ENCODE measurements at regions of chr14 and their contacts with region 1.

Region 1: DNA sequence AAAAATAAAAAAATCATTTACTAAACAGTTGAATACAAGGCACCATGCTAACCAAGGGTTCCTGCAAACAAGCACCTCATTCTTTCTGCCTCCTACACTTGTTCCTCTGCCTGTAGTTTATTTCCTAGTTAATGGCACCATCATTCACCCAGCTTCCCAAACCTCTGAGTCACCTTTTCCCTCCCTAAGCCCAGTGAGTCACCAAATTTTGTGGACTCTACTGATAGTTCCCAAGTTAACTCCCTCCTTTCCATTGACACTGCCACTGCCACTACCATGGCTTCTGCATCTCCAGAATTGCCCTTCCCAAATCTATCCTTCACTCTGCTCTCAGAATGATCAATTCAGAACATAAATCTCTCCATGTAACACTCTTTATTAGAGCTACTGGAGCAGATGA is 2.0 kb upstream of the GARIN2 start:
- DNase-seq: peak; percentile 67 to 90
- H3K4me3 ChIP-seq: peak overlapping the region; percentile 30; the same call in 1 of the 2 replicates
- H3K27ac ChIP-seq: peak overlapping the region; percentile 73
- H3K4me1 ChIP-seq: peaks cover 44% of the 10 kb centered on the region
- H3K27me3 ChIP-seq: no peaks in the 10 kb centered on the region
- CTCF ChIP-seq: no peak

Region 2: DNA sequence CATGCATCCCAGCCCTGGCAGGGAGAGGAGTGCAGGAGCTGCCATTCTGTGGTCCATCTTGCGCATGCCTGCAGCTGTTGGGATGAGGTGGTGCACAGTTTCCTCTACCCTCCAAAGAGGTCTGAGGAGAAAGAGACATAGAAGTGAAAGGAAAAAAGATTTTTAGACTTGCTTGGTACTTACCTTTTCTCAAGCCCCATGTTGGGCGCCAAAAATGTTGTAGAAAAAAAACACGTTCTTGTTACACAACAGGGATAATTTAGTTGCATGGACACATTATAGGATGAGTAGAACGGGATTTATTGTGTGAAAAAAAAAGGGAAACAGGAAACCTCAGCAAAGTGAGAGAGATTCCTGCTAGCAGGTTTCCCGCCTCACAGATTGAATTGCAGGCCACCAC is 242.3 kb before region 1 on chr14:
- CTCF ChIA-PET with region 1: no interaction called
- POLR2A ChIA-PET with region 1: no interaction called
- intact Hi-C with region 1: no loop called
- DNase-seq: no peak
- H3K4me3 ChIP-seq: no peak overlapping the region
- H3K27ac ChIP-seq: no peak overlapping the region
- H3K4me1 ChIP-seq: no peaks in the 10 kb centered on the region
- H3K27me3 ChIP-seq: no peaks in the 10 kb centered on the region
- CTCF ChIP-seq: no peak

Region 3: GRCh38 chr14:67221248-67221981 is 34.2 kb after region 1 on chr14:
- CTCF ChIA-PET with region 1: no interaction called
- POLR2A ChIA-PET with region 1: interaction called, 18 read pairs
- intact Hi-C with region 1: loop called (anchors 1 kb)
- DNase-seq: peak; percentile 24 to 97
- H3K4me3 ChIP-seq: no peak overlapping the region
- H3K27ac ChIP-seq: peak overlapping the region; percentile 33; the same call in 1 of the 2 replicates
- H3K4me1 ChIP-seq: peaks cover 24% of the 10 kb centered on the region
- H3K27me3 ChIP-seq: no peaks in the 10 kb centered on the region
- CTCF ChIP-seq: no peak